WTC11 (cell line): ENCODE measurements at regions of chr17 and their contacts with region 1.

Region 1: DNA sequence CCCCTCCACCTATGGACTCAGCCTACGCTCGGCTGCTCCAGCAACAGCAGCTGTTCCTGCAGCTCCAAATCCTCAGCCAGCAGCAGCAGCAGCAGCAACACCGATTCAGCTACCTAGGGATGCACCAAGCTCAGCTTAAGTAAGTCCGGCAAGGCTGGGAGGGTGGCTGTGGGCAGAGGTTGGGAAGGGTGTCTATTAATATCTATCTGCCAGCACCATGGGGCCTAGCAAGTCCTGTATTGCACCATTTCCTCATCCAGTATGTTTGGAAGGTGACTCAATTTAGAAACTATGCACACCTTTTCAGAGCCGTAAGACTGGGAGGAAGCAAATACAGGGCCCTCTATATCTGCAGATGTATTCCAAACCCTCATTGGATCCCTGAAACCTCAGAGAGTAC is 45.0 kb upstream of the ARHGAP44 start:
- DNase-seq: no peak
- ATAC-seq: no peak
- H3K4me3 Mint-ChIP-seq: no peak overlapping the region
- H3K27ac Mint-ChIP-seq: no peak overlapping the region
- H3K4me1 Mint-ChIP-seq: peaks cover 22% of the 10 kb centered on the region
- H3K27me3 Mint-ChIP-seq: no peaks in the 10 kb centered on the region
- CTCF ChIP-seq: no peak

Region 2: DNA sequence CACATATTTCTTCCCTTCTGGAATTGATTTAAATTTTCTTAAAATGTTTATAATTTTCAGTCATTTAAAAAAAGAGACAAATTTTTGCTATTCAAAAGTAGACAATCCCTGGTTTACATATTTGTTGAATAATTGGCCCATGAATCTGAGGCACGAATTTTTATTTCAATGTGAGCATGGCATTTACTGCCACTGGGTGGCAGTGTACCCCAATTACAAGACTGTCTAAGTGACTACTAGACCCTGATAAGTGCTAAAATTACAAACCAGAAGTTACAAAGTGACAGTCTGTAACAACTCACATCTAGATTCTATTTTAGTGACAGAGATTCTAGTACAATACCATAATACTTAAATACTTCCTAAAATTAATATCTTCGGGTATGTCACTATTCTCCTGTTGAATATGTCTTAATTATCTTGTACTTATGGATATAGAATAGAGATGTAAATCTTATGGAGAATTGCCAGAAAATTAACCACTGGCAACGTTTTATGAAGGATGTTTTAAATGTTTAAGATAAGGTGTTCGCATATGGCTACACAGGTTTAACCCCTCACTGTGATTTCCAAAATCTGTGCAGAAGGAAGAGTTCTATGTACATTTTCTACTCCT is 487.8 kb before region 1 on chr17:
- CTCF ChIA-PET with region 1: interaction called, 18 read pairs
- POLR2A ChIA-PET with region 1: interaction called, 3 read pairs
- DNase-seq: no peak
- ATAC-seq: no peak
- H3K4me3 Mint-ChIP-seq: no peak overlapping the region
- H3K27ac Mint-ChIP-seq: no peak overlapping the region
- H3K4me1 Mint-ChIP-seq: no peaks in the 10 kb centered on the region
- H3K27me3 Mint-ChIP-seq: no peaks in the 10 kb centered on the region
- CTCF ChIP-seq: peak; percentile 77

Region 3: DNA sequence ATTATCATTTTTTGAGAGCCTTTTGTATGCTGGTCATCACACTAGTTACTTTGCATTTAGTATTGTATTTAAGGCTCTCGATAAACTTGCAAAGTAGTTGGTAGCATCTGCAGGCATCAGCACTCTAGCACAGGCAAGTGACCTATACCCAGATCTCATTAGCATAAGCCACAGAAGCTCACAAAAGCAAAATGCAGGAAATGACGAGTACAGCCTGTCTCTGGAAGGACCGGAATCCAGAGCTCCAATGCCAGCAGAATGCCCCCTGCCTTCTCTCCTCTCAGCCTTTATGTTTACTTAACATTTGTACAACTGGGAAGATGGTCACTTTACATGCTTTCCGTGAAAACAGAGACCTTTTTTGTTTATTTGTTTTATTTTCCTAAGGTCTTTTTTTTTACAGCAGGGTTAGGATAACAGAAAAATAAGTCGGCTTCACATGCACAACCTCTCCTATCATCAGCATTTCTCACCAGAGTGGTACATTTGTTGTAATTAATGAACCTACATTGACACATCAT is 124.0 kb before region 1 on chr17:
- CTCF ChIA-PET with region 1: interaction called, 13 read pairs
- POLR2A ChIA-PET with region 1: no interaction called
- DNase-seq: no peak
- ATAC-seq: peak; percentile 52; the same call in 1 of the 2 replicates
- H3K4me3 Mint-ChIP-seq: no peak overlapping the region
- H3K27ac Mint-ChIP-seq: no peak overlapping the region
- H3K4me1 Mint-ChIP-seq: peaks cover 45% of the 10 kb centered on the region
- H3K27me3 Mint-ChIP-seq: no peaks in the 10 kb centered on the region
- CTCF ChIP-seq: no peak

Region 4: DNA sequence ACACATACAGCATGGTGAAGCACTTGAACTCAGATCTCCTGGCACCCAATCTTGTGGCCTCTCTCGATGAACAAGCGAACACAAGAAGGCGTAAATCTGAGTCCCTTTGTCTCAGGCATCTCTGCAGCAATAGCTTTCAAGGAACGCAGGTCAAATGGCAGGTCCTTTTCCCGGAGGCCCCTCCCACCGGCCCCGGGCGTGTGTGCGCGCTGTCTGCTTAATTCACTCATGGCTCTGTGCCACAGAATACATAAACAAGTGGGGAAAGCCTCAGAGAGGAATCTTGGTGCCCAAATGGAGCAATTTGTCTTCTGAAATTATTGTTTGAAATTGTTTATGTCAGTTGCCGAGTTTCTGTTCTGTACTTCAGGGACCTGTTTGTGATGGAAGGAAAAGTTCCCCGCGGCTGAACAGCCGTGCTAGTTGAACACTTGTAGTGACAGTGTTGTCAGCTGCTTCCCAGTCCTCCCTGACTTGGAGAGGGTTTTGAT is 63.8 kb before region 1 on chr17:
- CTCF ChIA-PET with region 1: interaction called, 13 read pairs
- POLR2A ChIA-PET with region 1: no interaction called
- DNase-seq: no peak
- ATAC-seq: no peak
- H3K4me3 Mint-ChIP-seq: no peak overlapping the region
- H3K27ac Mint-ChIP-seq: no peak overlapping the region
- H3K4me1 Mint-ChIP-seq: 0 out of 2 replicates have a peak, but pooled peaks cover 2% of the 10 kb centered on the region
- H3K27me3 Mint-ChIP-seq: no peaks in the 10 kb centered on the region; the same call in 1 of the 2 replicates
- CTCF ChIP-seq: no peak

Region 5: GRCh38 chr17:12712941-12713340 is 31.4 kb before region 1 on chr17:
- CTCF ChIA-PET with region 1: interaction called, 16 read pairs
- POLR2A ChIA-PET with region 1: no interaction called
- DNase-seq: no peak
- ATAC-seq: no peak
- H3K4me3 Mint-ChIP-seq: no peak overlapping the region
- H3K27ac Mint-ChIP-seq: no peak overlapping the region
- H3K4me1 Mint-ChIP-seq: peaks cover 30% of the 10 kb centered on the region
- H3K27me3 Mint-ChIP-seq: no peaks in the 10 kb centered on the region
- CTCF ChIP-seq: no peak

Region 6: DNA sequence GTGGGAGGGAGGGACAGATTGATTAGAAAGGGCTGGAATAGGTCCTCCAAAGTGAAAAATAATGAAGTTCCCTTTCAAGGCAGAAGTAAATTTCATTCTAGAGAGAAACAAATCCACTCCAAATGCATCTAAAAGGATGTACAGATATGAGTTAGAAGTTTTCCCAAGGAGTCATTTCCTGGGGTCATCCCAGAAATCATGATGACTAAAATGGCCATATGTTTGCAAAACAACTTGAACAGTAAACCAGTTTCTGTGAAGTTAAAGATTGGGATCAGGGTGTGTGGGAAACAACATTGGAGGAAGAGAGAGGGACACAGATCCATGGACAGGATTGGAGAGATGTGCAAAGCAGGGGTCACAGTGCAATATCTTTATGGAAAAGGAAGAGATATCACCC is 12.5 kb after region 1 on chr17:
- CTCF ChIA-PET with region 1: interaction called, 22 read pairs
- POLR2A ChIA-PET with region 1: no interaction called
- DNase-seq: no peak
- ATAC-seq: no peak
- H3K4me3 Mint-ChIP-seq: no peak overlapping the region
- H3K27ac Mint-ChIP-seq: no peak overlapping the region
- H3K4me1 Mint-ChIP-seq: 0 out of 2 replicates have a peak, but pooled peaks cover 3% of the 10 kb centered on the region
- H3K27me3 Mint-ChIP-seq: no peaks in the 10 kb centered on the region
- CTCF ChIP-seq: no peak

Region 7: GRCh38 chr17:12877953-12878669 is 133.8 kb after region 1 on chr17:
- CTCF ChIA-PET with region 1: no interaction called
- POLR2A ChIA-PET with region 1: no interaction called
- DNase-seq: no peak
- ATAC-seq: no peak
- H3K4me3 Mint-ChIP-seq: no peak overlapping the region
- H3K27ac Mint-ChIP-seq: no peak overlapping the region
- H3K4me1 Mint-ChIP-seq: 0 out of 2 replicates have a peak, but pooled peaks cover 4% of the 10 kb centered on the region
- H3K27me3 Mint-ChIP-seq: no peaks in the 10 kb centered on the region
- CTCF ChIP-seq: no peak